CD4-positive, alpha-beta T cell (primary cell): ENCODE measurements at regions of chr1 and their contacts with region 1.

Region 1: GRCh38 chr1:173824331-173825081 is at the starts of genes CENPL and DARS2:
- DNase-seq: peak; percentile 80 to 97 (median 86)
- ATAC-seq: peak; percentile 87
- H3K4me3 ChIP-seq: peak within 1 kb of the TSS; percentile 94
- H3K4me3 Mint-ChIP-seq: peak within 1 kb of the TSS; percentile 96
- H3K27ac ChIP-seq: peak within 1 kb of the TSS; percentile 77 to 92
- H3K27ac Mint-ChIP-seq: peak within 1 kb of the TSS; percentile 89
- H3K4me1 ChIP-seq: peaks cover 26% of the 10 kb centered on the region
- H3K4me1 Mint-ChIP-seq: peaks cover 45% of the 10 kb centered on the region
- H3K27me3 ChIP-seq: no peaks in the 10 kb centered on the region
- H3K27me3 Mint-ChIP-seq: no peaks in the 10 kb centered on the region
- CTCF ChIP-seq: no peak
- total RNA-seq, gene CENPL: 3.8 to 4.7 TPM
- total RNA-seq, gene DARS2: 1.7 TPM

Region 2: GRCh38 chr1:173429471-173430402 is 394.8 kb before region 1 on chr1:
- CTCF ChIA-PET with region 1: interaction called, 16 read pairs
- POLR2A ChIA-PET with region 1: interaction called, 21 read pairs
- intact Hi-C with region 1: loop called (anchors 1 kb)
- DNase-seq: peak; percentile 44 to 78 (median 58)
- ATAC-seq: peak; percentile 85
- H3K4me3 ChIP-seq: peak overlapping the region; percentile 16
- H3K4me3 Mint-ChIP-seq: peak overlapping the region; percentile 38
- H3K27ac ChIP-seq: no peak overlapping the region
- H3K27ac Mint-ChIP-seq: peak overlapping the region; percentile 6
- H3K4me1 ChIP-seq: peaks cover 13% of the 10 kb centered on the region
- H3K4me1 Mint-ChIP-seq: peaks cover 23% of the 10 kb centered on the region
- H3K27me3 ChIP-seq: no peaks in the 10 kb centered on the region
- H3K27me3 Mint-ChIP-seq: no peaks in the 10 kb centered on the region
- CTCF ChIP-seq: peak; percentile 71

Region 3: DNA sequence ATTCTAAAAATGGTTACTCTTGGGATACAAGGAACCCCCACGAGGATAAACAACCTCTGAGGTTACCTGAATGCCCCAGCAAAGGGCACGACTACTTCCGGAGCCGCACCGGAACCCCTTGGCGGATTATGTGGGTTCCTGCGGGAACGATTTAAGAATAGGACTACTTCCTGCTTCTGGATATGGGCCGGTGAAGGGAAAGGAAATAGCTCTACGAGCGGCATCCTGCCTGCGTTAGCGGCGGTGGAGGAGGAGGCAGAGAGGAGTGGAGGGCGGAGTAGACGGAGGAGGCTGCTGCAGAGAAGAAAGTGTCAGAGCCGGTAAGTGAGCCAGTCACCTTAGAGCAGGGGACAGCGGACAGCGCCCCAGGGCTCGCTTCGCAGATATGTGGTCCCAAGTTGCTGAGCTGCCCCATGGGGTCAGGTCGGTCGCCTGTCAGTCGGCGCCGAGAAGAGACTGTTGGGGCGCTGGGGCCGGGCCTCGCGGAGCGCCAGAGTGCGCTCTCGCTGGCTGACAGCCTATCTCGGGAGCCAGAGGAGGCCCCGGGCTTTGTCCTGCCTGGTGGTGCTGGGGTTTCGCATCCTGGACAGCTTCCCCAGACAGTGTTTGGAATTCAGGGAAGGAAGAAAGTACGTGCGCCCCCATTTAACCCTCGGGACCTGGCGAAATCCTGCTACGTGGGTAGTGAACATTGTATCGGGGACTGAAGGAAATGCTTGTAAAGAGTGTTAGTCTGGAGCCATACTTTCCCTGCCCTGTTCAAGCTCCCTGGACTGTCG is 109.6 kb before region 1 on chr1 and contains the start of gene KLHL20:
- CTCF ChIA-PET with region 1: interaction called, 8 read pairs
- POLR2A ChIA-PET with region 1: interaction called, 27 read pairs
- intact Hi-C with region 1: loop called (anchors 2 to 10 kb)
- DNase-seq: peak; percentile 70 to 94 (median 81)
- ATAC-seq: peak; percentile 97
- H3K4me3 ChIP-seq: peak within 1 kb of the TSS; percentile 63
- H3K4me3 Mint-ChIP-seq: peak within 1 kb of the TSS; percentile 97
- H3K27ac ChIP-seq: peak within 1 kb of the TSS; percentile 73 to 81
- H3K27ac Mint-ChIP-seq: peak within 1 kb of the TSS; percentile 91
- H3K4me1 ChIP-seq: peaks cover 8% of the 10 kb centered on the region
- H3K4me1 Mint-ChIP-seq: peaks cover 36% of the 10 kb centered on the region
- H3K27me3 ChIP-seq: peaks cover 4 to 19% of the 10 kb centered on the region in 2 experiments
- H3K27me3 Mint-ChIP-seq: peaks cover 18% of the 10 kb centered on the region
- CTCF ChIP-seq: no peak
- total RNA-seq, gene KLHL20: 29.4 to 30.4 TPM

Region 4: GRCh38 chr1:174022080-174022975 is 197.8 kb after region 1 on chr1 and contains the start of gene RC3H1:
- CTCF ChIA-PET with region 1: no interaction called
- POLR2A ChIA-PET with region 1: interaction called, 6 read pairs
- intact Hi-C with region 1: loop called in 1 of 2 experiments (anchors 2 kb)
- DNase-seq: peak; percentile 80 to 94 (median 88)
- ATAC-seq: peak; percentile 91
- H3K4me3 ChIP-seq: peak within 1 kb of the TSS; percentile 97
- H3K4me3 Mint-ChIP-seq: peak within 1 kb of the TSS; percentile 99
- H3K27ac ChIP-seq: peak within 1 kb of the TSS; percentile 85 to 90
- H3K27ac Mint-ChIP-seq: peak within 1 kb of the TSS; percentile 91
- H3K4me1 ChIP-seq: peaks cover 27% of the 10 kb centered on the region
- H3K4me1 Mint-ChIP-seq: peaks cover 55% of the 10 kb centered on the region
- H3K27me3 ChIP-seq: no peaks in the 10 kb centered on the region
- H3K27me3 Mint-ChIP-seq: no peaks in the 10 kb centered on the region
- CTCF ChIP-seq: no peak
- total RNA-seq, gene RC3H1: 38.0 to 40.4 TPM

Region 5: DNA sequence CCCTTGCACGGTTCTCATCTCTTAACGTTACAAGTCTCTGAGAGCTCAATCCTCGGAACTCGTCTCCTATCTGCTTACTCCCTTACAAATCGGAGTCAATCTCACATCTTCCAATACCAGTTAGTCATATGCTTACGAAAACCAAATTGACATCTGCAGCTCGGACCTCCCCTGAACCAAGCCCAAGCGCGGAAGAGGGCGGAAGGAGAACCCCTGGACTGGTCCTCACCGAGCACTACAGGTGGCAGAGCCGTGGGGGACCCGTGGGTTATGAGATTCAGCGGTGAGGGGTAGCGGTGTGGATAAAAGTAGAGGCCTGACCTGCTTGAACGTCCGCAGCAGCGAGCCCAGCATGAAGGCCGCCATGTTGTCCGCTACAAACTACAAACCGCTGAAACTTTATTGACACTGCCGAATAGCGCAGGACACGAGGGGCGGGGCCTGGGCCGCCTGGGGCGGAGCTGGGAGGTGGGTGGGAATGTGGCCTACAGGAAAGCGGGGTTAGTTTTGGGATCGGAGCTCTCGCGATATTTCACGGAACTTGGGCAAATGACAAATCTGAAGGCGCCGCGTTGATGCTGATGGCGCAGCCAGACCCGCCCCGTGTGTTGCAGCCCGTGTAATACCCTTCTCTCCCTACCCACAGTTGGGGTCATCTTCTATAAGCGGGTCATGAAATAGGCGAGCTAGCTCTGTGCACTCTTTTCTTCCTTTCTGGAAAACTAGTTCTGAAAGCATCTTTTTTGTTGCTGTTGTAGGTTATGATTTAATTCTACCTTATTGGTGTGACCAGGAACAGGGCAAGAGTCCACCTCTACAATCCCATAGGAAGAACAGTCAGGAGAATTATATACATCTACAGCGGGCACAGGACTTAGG is 1198.8 kb after region 1 on chr1 and contains the start of gene MRPS14:
- CTCF ChIA-PET with region 1: no interaction called
- POLR2A ChIA-PET with region 1: interaction called, 3 read pairs
- intact Hi-C with region 1: loop called in 1 of 2 experiments (anchors 10 kb)
- DNase-seq: peak; percentile 96 to 99 (median 98)
- ATAC-seq: peak; percentile 90
- H3K4me3 ChIP-seq: peak within 1 kb of the TSS; percentile 97
- H3K4me3 Mint-ChIP-seq: peak within 1 kb of the TSS; percentile 88
- H3K27ac ChIP-seq: peak within 1 kb of the TSS; percentile 84 to 91
- H3K27ac Mint-ChIP-seq: peak within 1 kb of the TSS; percentile 94
- H3K4me1 ChIP-seq: peaks cover 19% of the 10 kb centered on the region
- H3K4me1 Mint-ChIP-seq: peaks cover 34% of the 10 kb centered on the region
- H3K27me3 ChIP-seq: no peaks in the 10 kb centered on the region
- H3K27me3 Mint-ChIP-seq: no peaks in the 10 kb centered on the region
- CTCF ChIP-seq: no peak
- total RNA-seq, gene MRPS14: 8.5 to 9.6 TPM